ENCODE measurements at regions of chr9 and their contacts with region 1.

Region 1: GRCh38 chr9:98998441-98999151 is 54.9 kb downstream of the COL15A1 start:
- DNase-seq: peak; percentile 70 to 95 (median 82)
- H3K4me3 ChIP-seq: no peak overlapping the region
- H3K27ac ChIP-seq: peak overlapping the region in 1 of 2 donors; percentile 63
- H3K4me1 ChIP-seq: peaks cover 0 to 9% (median 0%) of the 10 kb centered on the region in 3 donors
- H3K27me3 ChIP-seq: no peaks in the 10 kb centered on the region
- CTCF ChIP-seq: peak; percentile 85

Region 2: DNA sequence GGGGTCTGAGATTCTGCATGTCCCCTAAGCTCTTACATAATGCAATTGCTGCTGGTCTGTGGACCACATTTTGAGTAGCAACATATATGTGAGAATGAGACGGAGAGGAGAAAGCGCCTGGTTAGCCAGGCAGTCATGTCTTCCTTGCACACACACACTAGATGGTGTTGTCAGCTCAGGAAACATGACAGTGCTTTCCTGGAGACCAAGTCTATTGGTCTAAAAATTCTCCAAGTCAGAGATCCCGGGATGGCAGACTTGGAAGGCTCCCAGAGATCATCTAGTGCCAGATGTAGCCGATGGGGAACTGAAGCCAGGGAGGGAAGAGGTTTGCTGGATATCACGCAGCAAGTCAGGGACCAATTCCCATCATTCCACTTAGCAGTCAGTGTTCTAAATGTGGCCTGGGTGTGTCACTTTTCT is 137.7 kb before region 1 on chr9:
- intact Hi-C with region 1: loop called (anchors 10 kb)
- DNase-seq: peak in 4 of 5 donors; percentile 21 to 73 (median 36)
- H3K4me3 ChIP-seq: no peak overlapping the region
- H3K27ac ChIP-seq: no peak overlapping the region
- H3K4me1 ChIP-seq: peaks cover 0 to 6% (median 3%) of the 10 kb centered on the region in 3 donors
- H3K27me3 ChIP-seq: no peaks in the 10 kb centered on the region
- CTCF ChIP-seq: peak; percentile 36

Region 3: GRCh38 chr9:99040911-99041582 is 42.5 kb after region 1 on chr9:
- intact Hi-C with region 1: no loop called
- DNase-seq: no peak
- H3K4me3 ChIP-seq: no peak overlapping the region
- H3K27ac ChIP-seq: no peak overlapping the region
- H3K4me1 ChIP-seq: no peaks in the 10 kb centered on the region
- H3K27me3 ChIP-seq: no peaks in the 10 kb centered on the region
- CTCF ChIP-seq: no peak

Region 4: DNA sequence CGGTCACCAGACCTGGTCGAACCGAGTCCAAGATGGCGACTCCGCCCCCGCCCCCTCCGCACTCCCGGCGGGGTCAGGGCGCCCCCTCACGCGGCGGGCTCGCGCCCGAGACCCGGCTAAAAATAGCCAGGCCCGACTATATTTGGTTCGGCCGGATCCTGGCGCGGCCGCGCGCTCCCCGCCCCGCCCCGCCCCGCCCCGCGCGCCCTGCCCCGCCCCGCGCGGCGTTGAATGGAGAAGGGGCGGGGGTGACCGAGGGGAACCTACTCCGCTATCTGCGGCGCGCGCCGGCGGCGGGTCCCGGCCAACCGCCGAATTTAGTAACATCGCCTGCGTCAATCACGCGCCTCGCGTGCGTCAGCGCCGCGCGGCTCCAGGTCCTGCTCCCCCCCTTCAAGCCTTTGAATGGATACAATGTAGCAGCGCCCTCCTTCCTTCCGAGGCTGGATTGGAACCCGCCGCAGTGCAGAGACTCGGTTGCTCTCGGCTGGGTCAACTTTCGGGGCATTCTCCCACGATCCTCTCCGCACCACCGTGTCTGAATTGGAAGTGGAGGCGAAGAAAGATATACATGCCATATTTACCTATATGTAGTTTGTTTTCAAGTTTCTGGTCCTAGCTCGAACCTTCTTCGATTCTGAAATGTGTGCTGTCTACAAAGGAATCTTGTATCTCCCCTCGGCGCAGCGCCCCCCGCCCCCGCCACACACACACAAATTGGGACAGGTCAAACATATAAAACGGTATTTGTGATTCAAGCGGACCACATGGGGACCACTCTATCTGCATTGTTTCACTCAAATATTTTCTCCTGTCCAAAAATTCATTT is 821.5 kb after region 1 on chr9:
- intact Hi-C with region 1: no loop called
- DNase-seq: peak; percentile 91 to 97 (median 95)
- H3K4me3 ChIP-seq: peak overlapping the region; percentile 78 to 97 (median 89)
- H3K27ac ChIP-seq: peak overlapping the region; percentile 93 to 99
- H3K4me1 ChIP-seq: peaks cover 5 to 23% (median 16%) of the 10 kb centered on the region in 3 donors
- H3K27me3 ChIP-seq: peaks cover 12% of the 10 kb centered on the region
- CTCF ChIP-seq: no peak